K562 (cell line): ENCODE measurements at regions of chr21 and their contacts with region 1.

Region 1: GRCh38 chr21:45287438-45288391 is at the start of gene POFUT2:
- DNase-seq: peak; percentile 98 to 100 (median 100)
- ATAC-seq: peak; percentile 89
- H3K4me3 ChIP-seq: peak within 1 kb of the TSS; percentile 92
- H3K27ac ChIP-seq: peak within 1 kb of the TSS; percentile 68; the same call in 2 of the 3 replicates
- H3K4me1 ChIP-seq: peaks cover 12 to 36% of the 10 kb centered on the region in 2 experiments; a peak in 4 of 5 replicates
- H3K27me3 ChIP-seq: no peaks in the 10 kb centered on the region
- CTCF ChIP-seq: peak in 1 of 3 experiments; percentile 8; a peak in 1 of 6 replicates
- EP300 ChIP-seq: no peak
- POLR2A ChIP-seq: peak; percentile 83
- RAD21 ChIP-seq: no peak
- polyA plus RNA-seq, gene POFUT2: 1.1 to 2.9 TPM

Region 2: GRCh38 chr21:45115141-45115540 is 172.6 kb before region 1 on chr21:
- CTCF ChIA-PET with region 1: no interaction called
- POLR2A ChIA-PET with region 1: no interaction called
- in situ Hi-C with region 1: no loop called
- intact Hi-C with region 1: no loop called
- DNase-seq: no peak
- ATAC-seq: no peak
- H3K4me3 ChIP-seq: no peak overlapping the region
- H3K27ac ChIP-seq: no peak overlapping the region
- H3K4me1 ChIP-seq: peaks cover 12 to 33% of the 10 kb centered on the region in 2 experiments
- H3K27me3 ChIP-seq: no peaks in the 10 kb centered on the region
- CTCF ChIP-seq: no peak
- EP300 ChIP-seq: no peak
- POLR2A ChIP-seq: no peak
- RAD21 ChIP-seq: no peak

Region 3: GRCh38 chr21:45277101-45278045 is 10.3 kb before region 1 on chr21:
- CTCF ChIA-PET with region 1: no interaction called
- POLR2A ChIA-PET with region 1: interaction called, 11 read pairs
- in situ Hi-C with region 1: no loop called
- intact Hi-C with region 1: no loop called
- DNase-seq: no peak
- ATAC-seq: no peak
- H3K4me3 ChIP-seq: no peak overlapping the region
- H3K27ac ChIP-seq: no peak overlapping the region
- H3K4me1 ChIP-seq: peaks cover 0 to 12% of the 10 kb centered on the region in 2 experiments; a peak in 4 of 5 replicates
- H3K27me3 ChIP-seq: no peaks in the 10 kb centered on the region
- CTCF ChIP-seq: no peak
- EP300 ChIP-seq: no peak
- POLR2A ChIP-seq: no peak
- RAD21 ChIP-seq: no peak

Region 4: DNA sequence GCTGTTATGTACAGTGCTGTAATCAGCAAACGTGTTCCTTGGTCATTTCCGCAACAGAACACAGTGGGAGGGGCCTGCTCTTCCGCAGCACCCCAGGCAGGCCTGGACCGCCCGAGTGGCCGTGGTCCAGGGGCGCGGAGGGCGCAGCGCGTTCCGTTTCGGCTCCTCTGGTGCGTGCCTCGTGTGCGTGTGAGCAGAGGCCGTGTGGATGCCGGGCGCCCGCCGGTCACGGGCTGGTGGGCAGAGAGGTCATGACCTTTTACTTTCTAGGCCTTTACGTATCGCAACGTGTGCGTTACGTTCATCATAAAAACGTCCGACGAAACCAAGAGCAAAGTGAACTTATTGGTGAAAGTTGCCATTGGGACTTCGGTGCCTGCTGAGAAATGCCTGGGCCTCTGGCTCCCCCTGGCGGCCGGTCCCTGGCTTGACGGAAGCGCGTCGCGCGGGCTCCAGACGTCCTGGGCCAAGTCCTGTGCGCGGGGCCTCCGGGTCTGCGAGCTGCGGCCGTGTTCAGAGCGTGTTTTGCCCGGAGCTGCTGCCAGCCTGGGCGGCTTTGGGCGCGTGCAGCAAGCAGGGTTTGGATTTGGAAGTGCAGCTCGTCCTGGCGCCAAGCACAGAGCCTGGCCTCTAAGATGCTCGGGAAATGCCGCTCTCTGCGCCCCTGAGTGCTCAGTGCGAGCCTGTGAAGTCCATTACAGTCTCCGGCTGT is 151.6 kb after region 1 on chr21:
- CTCF ChIA-PET with region 1: interaction called, 100 read pairs
- POLR2A ChIA-PET with region 1: no interaction called
- in situ Hi-C with region 1: no loop called
- intact Hi-C with region 1: loop called (anchors 1 kb)
- DNase-seq: peak; percentile 90 to 91 (median 90)
- ATAC-seq: peak; percentile 98
- H3K4me3 ChIP-seq: no peak overlapping the region
- H3K27ac ChIP-seq: peak overlapping the region; percentile 55; the same call in 2 of the 3 replicates
- H3K4me1 ChIP-seq: peaks cover 10 to 61% of the 10 kb centered on the region in 2 experiments; a peak in 4 of 5 replicates
- H3K27me3 ChIP-seq: peaks cover 0 to 7% of the 10 kb centered on the region in 2 experiments; a peak in 2 of 5 replicates
- CTCF ChIP-seq: peak; percentile 97 to 98 (median 98)
- EP300 ChIP-seq: no peak
- POLR2A ChIP-seq: no peak
- RAD21 ChIP-seq: peak; percentile 100

Region 5: GRCh38 chr21:45590246-45590725 is 302.6 kb after region 1 on chr21:
- CTCF ChIA-PET with region 1: no interaction called
- POLR2A ChIA-PET with region 1: no interaction called
- in situ Hi-C with region 1: no loop called
- intact Hi-C with region 1: loop called (anchors 5 kb)
- DNase-seq: peak; percentile 76 to 97 (median 97)
- ATAC-seq: peak; percentile 84
- H3K4me3 ChIP-seq: peak overlapping the region; percentile 53
- H3K27ac ChIP-seq: no peak overlapping the region
- H3K4me1 ChIP-seq: peaks cover 23 to 42% of the 10 kb centered on the region in 2 experiments
- H3K27me3 ChIP-seq: peaks cover 0 to 4% of the 10 kb centered on the region in 2 experiments; a peak in 2 of 5 replicates
- CTCF ChIP-seq: no peak
- EP300 ChIP-seq: no peak
- POLR2A ChIP-seq: no peak
- RAD21 ChIP-seq: no peak

Region 6: GRCh38 chr21:45618287-45618686 is 330.6 kb after region 1 on chr21:
- CTCF ChIA-PET with region 1: no interaction called
- POLR2A ChIA-PET with region 1: no interaction called
- in situ Hi-C with region 1: no loop called
- intact Hi-C with region 1: no loop called
- DNase-seq: no peak
- ATAC-seq: no peak
- H3K4me3 ChIP-seq: no peak overlapping the region
- H3K27ac ChIP-seq: no peak overlapping the region
- H3K4me1 ChIP-seq: peaks cover 2 to 18% of the 10 kb centered on the region in 2 experiments; a peak in 3 of 5 replicates
- H3K27me3 ChIP-seq: peaks cover 65 to 86% of the 10 kb centered on the region in 2 experiments
- CTCF ChIP-seq: no peak
- EP300 ChIP-seq: no peak
- POLR2A ChIP-seq: no peak
- RAD21 ChIP-seq: no peak